Right cardiac atrium (tissue), 5 donors: ENCODE measurements at regions of chr11 and their contacts with region 1.

Region 1: DNA sequence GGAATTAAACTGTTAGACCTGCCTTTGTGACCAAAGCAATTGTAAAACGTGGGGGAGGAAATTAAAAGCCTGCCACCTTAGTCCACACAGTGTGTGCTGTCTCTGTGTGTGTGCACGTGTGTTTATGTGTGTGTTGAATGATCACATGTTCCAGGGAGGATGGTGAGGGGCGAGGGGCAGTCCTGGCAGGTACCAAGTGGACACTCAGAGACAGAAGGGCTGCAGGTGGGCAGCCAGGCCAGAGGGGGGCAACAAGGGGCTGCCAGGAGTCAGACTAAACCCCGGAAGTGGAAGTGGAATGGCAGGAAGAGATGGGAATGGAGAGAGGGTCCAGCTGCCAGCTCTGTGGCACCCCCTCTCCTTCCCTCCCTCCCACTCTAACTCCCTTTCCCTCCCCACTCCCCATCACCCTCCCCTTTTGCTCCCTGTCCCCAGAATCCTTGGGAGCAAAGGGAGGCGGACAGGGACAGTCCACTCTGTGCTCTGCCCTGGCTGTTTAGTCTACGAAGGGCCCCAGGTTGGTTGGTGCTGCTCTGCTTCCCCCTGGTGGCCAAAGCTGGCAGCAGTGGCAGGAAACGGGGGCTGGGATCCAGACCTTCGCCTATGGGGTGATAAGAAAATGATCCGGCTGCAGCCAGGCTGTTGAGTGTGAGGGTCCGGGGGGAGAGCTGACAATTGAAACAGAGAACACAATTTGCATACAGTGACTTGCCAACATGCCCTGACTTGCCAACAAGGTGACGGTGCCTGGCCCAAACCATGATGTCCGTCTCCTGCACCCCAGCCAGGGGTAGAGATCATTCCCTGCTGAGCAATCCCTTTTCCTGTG is 24.4 kb downstream of the P2RY2 start:
- DNase-seq: peak; percentile 81 to 92 (median 91)
- ATAC-seq: peak; percentile 58 to 80
- H3K4me3 ChIP-seq: no peak overlapping the region
- H3K27ac ChIP-seq: no peak overlapping the region
- H3K4me1 ChIP-seq: peaks cover 16% of the 10 kb centered on the region
- H3K27me3 ChIP-seq: no peaks in the 10 kb centered on the region

Region 2: DNA sequence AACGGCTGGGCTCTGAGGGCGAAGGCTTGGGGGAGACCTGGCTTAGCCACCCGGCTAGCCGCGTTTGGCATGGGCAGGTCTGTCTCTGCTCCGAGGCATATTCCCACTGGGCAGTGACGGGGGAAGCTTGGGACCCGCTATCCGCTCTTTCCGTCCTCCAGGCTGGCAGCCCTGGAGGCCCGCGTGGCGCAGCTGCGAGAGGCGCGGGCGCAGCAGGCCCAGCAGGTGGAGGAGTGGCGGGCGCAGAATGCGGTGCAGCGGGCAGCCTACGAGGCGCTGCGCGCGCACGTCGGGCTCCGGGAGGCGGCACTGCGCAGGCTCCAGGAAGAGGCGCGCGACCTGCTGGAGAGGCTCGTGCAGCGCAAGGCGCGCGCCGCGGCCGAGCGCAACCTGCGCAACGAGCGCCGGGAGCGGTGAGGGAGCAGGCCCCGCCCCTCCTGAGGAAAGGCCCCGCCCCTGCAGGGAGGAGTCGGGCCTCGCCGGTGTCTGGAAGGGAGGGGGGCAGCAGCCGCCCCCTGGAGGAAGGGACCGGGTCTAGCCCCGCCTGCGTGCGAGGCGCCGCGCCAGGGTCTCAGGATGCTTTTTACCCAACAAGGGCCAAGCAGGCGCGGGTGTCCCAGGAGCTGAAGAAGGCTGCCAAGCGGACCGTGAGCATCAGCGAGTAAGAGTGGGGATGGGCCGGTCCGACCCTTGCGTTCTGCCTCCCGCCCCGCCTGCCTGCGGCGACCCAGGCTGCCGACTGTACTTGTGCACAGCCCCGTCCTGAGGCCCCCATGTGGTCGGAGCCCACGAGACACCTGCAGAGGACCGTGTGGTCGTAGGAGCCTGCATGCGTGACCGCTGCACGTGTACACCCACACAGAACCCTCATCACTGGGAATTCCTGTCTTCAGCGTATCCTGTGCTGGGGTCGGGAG is 420.3 kb before region 1 on chr11:
- intact Hi-C with region 1: loop called in 1 of 4 experiments (anchors 10 kb)
- DNase-seq: peak; percentile 89 to 96 (median 96)
- ATAC-seq: peak; percentile 81 to 83
- H3K4me3 ChIP-seq: peak overlapping the region; percentile 40
- H3K27ac ChIP-seq: peak overlapping the region; percentile 4
- H3K4me1 ChIP-seq: peaks cover 3% of the 10 kb centered on the region
- H3K27me3 ChIP-seq: no peaks in the 10 kb centered on the region

Region 3: DNA sequence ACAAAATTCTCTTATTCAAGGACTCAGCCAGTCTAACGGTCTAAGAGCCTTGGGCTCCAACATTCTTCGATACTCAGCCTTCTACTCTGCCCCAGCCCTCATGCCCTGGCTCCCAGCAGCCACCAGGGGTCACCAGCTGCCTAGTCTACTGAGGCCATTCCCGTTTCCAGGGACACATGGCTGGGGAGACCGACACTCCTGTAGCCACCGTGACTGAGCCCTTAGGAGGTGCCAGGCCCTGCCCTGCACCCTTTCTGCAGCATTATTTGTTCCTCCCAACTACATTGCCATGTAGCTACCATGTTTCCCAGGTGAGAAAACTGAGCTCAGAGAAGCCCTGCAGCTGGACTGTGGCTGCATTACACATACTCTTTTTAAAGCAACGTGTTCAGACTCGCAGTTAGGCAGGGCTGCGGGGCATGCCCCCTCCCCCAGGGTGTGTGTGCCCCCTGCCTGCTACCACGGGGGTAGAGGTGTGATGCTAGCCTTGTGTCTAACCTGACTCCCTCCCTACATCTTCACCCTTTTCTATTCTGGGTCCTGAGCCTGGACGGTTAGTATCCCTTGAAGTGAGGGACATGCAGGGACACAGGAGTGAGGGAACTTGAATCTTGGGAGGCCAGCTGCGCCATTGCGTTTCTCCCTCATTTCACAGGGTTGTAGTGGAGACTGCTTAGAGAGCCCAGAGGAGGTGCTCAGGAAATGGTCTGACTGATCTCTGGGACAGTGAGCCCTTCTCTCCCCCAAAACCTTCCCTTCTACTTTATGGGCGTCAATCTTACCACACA is 410.8 kb before region 1 on chr11:
- intact Hi-C with region 1: loop called (anchors 5 to 10 kb)
- DNase-seq: peak; percentile 87 to 95 (median 94)
- ATAC-seq: peak; percentile 77 to 79
- H3K4me3 ChIP-seq: no peak overlapping the region
- H3K27ac ChIP-seq: peak overlapping the region; percentile 44
- H3K4me1 ChIP-seq: peaks cover 33% of the 10 kb centered on the region
- H3K27me3 ChIP-seq: no peaks in the 10 kb centered on the region

Region 4: GRCh38 chr11:73157053-73158010 is 85.1 kb before region 1 on chr11:
- intact Hi-C with region 1: no loop called
- DNase-seq: peak; percentile 40 to 81 (median 76)
- ATAC-seq: peak; percentile 77 to 84
- H3K4me3 ChIP-seq: no peak overlapping the region
- H3K27ac ChIP-seq: peak overlapping the region; percentile 86
- H3K4me1 ChIP-seq: peaks cover 13% of the 10 kb centered on the region
- H3K27me3 ChIP-seq: no peaks in the 10 kb centered on the region